ENCODE measurements at regions of chr6 and their contacts with region 1.

Region 1: DNA sequence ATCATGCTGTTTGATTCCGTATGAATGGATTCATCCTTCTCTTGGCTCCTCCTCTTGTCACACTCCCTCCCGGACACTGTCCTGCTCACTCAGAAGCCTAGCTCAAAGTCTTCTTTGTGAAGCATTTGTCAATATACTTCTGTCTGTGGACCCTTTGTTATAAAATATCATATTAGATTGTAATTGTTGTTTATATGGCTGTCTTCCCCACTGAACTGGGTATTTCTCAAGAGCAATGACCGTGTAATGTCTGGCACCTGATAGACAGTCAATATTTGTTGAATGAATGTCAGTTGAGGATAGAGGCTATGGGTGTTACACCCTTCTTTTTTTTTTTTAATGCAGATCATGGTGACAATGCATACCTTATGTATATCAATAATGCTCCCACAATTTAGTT is 335.3 kb downstream of the SOX4 start:
- DNase-seq: no peak
- H3K4me3 Mint-ChIP-seq: no peak overlapping the region
- H3K27ac Mint-ChIP-seq: no peak overlapping the region
- H3K4me1 Mint-ChIP-seq: peaks cover 34% of the 10 kb centered on the region
- H3K27me3 Mint-ChIP-seq: no peaks in the 10 kb centered on the region

Region 2: DNA sequence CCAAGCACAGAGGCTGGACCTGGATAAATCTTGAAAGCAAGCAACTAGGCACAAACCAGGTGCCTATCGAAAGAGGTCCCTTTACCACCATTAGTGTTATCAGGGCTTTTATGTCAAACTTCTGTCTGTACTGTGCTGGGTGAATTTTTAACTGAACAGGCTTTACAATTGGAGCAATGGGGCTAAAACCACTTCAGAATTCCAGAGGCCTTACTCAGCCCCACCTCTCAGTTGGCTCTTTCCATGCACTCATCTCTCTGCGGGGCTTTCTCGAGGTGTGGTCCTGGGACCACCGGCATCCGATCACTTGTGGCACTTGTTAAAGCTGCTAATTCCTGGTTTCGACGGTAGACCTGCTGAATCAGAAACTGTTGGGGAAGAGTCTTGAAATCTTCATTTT is 102.8 kb before region 1 on chr6:
- intact Hi-C with region 1: loop called (anchors 5 kb)
- DNase-seq: no peak
- H3K4me3 Mint-ChIP-seq: no peak overlapping the region
- H3K27ac Mint-ChIP-seq: no peak overlapping the region
- H3K4me1 Mint-ChIP-seq: peaks cover 22% of the 10 kb centered on the region
- H3K27me3 Mint-ChIP-seq: no peaks in the 10 kb centered on the region

Region 3: GRCh38 chr6:21873562-21873961 is 55.3 kb before region 1 on chr6:
- intact Hi-C with region 1: loop called (anchors 1 kb)
- DNase-seq: no peak
- H3K4me3 Mint-ChIP-seq: no peak overlapping the region
- H3K27ac Mint-ChIP-seq: no peak overlapping the region
- H3K4me1 Mint-ChIP-seq: peaks cover 27% of the 10 kb centered on the region
- H3K27me3 Mint-ChIP-seq: no peaks in the 10 kb centered on the region

Region 4: DNA sequence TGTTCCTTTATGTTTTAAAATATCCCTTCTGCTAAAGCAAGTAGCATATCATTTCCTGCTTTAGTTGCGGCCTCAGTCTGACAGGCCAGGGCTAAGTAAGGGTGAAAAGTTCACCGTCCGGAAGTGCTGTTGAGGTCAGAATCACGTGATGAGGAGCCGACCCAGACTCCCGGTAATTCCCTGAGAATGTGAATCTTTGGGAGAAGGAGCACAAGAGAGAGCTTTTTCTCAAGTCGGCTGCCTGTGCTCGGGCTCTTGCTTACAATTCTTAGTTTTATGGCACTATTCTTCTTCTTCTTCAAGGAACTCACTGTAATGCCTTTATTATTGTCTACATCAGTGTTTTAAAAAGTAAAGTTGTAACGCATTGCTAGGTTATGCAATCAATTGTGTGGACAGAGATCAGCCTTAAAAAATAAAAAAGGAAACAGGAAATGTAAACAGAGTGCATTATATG is 58.7 kb after region 1 on chr6:
- intact Hi-C with region 1: loop called (anchors 5 kb)
- DNase-seq: no peak
- H3K4me3 Mint-ChIP-seq: peak overlapping the region; percentile 30
- H3K27ac Mint-ChIP-seq: peak overlapping the region; percentile 17
- H3K4me1 Mint-ChIP-seq: peaks cover 25% of the 10 kb centered on the region
- H3K27me3 Mint-ChIP-seq: no peaks in the 10 kb centered on the region

Region 5: GRCh38 chr6:22008248-22008836 is 79.5 kb after region 1 on chr6:
- intact Hi-C with region 1: no loop called
- DNase-seq: no peak
- H3K4me3 Mint-ChIP-seq: no peak overlapping the region
- H3K27ac Mint-ChIP-seq: no peak overlapping the region
- H3K4me1 Mint-ChIP-seq: peaks cover 8% of the 10 kb centered on the region
- H3K27me3 Mint-ChIP-seq: peaks cover 3% of the 10 kb centered on the region

Region 6: GRCh38 chr6:22025468-22026160 is 96.8 kb after region 1 on chr6:
- intact Hi-C with region 1: loop called (anchors 5 kb)
- DNase-seq: peak; percentile 13
- H3K4me3 Mint-ChIP-seq: peak overlapping the region; percentile 43
- H3K27ac Mint-ChIP-seq: peak overlapping the region; percentile 78
- H3K4me1 Mint-ChIP-seq: peaks cover 39% of the 10 kb centered on the region
- H3K27me3 Mint-ChIP-seq: no peaks in the 10 kb centered on the region

Measured in activated T-helper 2 cell treated with anti-CD3 and anti-CD28 coated beads, Interferon-gamma antibody, Interleukin-2, Interleukin-4, amounts not matched to agents 10 μg/mL and 5 μg/mL and 100 μg/mL, durations not matched to agents 14 hours and 24 hours and 36 hours (primary cell).